ENCODE measurements at regions of chr22 and their contacts with region 1.

Region 1: DNA sequence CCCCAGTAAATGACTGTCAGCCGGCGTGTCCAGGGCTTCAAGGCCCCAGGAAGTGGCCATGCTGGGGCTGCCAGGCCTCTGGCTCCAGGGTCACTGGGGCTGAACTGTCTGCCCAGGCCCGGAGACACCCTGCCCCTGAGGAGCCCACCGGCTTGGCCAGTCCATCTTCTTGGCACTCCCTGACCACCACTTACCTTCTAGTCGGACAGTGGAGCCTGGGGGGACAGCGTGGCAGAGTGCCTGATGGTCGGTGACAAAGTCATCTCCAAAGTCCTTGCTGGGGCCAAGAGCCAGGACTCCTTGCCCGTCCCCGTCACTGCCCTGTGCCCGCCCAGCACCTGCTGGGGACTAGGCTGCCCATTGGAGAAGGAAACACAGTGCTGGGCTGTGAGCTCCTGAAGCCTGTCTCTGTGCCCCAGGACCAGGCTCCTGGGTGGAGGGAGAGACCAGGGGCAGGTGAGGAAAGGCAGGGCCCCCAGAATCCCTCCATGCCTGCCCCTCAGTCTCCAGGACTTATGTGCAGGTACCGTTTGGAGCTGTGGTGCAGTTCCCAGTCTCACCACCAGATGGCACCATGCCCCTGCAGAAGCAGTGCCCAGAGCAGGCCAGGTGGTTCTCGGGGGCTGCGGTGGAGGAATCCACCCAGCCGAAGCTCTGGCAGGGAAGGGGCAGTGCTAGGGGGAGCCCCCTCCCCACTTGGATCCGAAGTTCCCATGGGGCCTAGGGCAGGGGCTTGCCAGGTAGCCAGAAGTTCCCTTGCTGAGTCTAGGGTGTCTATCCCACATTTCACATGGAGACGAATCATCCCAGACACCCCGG is 6.0 kb upstream of the CCDC188 start:
- DNase-seq: peak; percentile 83
- H3K4me3 ChIP-seq: no peak overlapping the region
- H3K27ac ChIP-seq: no peak overlapping the region
- H3K4me1 ChIP-seq: no peaks in the 10 kb centered on the region
- H3K27me3 ChIP-seq: no peaks in the 10 kb centered on the region
- CTCF ChIP-seq: peak; percentile 99 to 100 (median 99)
- POLR2A ChIP-seq: peak; percentile 14

Region 2: DNA sequence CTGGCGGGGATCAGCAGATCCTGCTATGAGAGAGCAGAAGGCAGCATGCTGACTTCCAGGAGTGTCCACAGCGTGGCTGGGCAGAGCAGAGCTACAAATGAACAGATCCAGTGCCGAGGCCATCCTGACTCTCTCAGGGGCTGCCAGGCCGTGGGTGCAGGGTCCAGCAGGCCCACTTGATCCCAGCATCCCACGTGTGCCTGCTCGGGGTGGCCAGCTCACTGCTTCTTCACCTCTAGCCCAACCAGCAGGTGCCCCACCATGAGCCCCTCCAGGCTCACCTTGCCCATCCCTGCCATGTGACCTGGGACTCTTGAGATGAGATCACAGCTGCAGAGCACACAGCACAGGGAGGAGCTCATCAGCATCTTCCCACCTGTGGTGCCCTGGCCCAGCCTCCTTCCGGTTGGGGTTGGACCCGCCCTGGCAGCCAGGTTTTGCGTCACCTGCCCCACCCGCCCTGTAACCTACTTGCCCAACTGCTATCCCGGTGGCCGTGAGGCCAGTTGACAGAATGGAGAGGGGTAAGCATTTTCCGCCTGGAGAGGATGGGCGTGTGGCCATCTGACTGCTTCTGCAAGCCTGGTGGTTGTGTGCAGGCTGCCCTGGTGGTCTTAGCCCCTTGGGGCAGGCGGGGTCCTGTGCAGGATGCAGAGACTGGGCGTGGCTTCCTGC is 125.0 kb before region 1 on chr22:
- intact Hi-C with region 1: no loop called
- DNase-seq: no peak
- H3K4me3 ChIP-seq: no peak overlapping the region
- H3K27ac ChIP-seq: no peak overlapping the region
- H3K4me1 ChIP-seq: no peaks in the 10 kb centered on the region
- H3K27me3 ChIP-seq: no peaks in the 10 kb centered on the region
- CTCF ChIP-seq: no peak
- POLR2A ChIP-seq: no peak

Region 3: DNA sequence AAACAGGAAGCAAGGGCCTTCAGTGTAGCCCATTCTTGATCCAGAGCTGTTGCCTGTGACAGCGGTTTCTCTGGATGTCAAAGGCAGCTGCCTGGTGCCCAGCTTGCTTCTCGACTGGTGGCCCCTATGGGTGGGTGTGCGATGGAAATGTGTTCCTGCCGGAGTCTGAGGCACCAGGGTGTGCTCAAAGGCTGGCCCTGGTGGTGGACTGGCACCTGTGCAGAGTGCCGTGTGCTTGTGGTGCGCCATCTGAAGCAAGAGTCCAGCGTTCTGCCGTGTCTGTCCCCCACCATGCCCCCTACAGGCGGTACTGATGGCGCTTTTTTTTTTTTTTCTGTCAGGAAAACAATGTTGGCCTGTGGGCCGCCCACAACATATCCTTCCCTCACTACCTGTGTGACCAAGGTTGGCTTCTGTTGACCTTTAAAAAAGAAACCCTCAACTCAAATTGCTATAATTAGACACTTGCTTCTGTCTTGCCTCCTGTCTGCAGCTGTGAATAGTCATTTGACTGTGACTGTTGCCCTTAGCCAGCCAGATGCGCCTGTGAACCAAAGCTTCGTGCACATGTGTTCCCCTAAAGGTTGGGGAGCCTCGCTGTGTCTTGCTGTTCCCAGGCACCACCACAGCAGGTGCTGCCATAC is 45.7 kb before region 1 on chr22:
- intact Hi-C with region 1: no loop called
- DNase-seq: no peak
- H3K4me3 ChIP-seq: no peak overlapping the region
- H3K27ac ChIP-seq: no peak overlapping the region
- H3K4me1 ChIP-seq: peaks cover 3% of the 10 kb centered on the region
- H3K27me3 ChIP-seq: no peaks in the 10 kb centered on the region
- CTCF ChIP-seq: peak in 1 of 4 experiments; percentile 16
- POLR2A ChIP-seq: no peak

Region 4: GRCh38 chr22:20268279-20269012 is 111.6 kb after region 1 on chr22 and contains the start of gene RTN4R:
- intact Hi-C with region 1: loop called (anchors 5 kb)
- DNase-seq: peak; percentile 48
- H3K4me3 ChIP-seq: peak within 1 kb of the TSS; percentile 37 to 60
- H3K27ac ChIP-seq: peak within 1 kb of the TSS; percentile 55 to 56
- H3K4me1 ChIP-seq: no peaks in the 10 kb centered on the region
- H3K27me3 ChIP-seq: no peaks in the 10 kb centered on the region
- CTCF ChIP-seq: peak; percentile 26 to 88 (median 59)
- POLR2A ChIP-seq: no peak
- total RNA-seq, gene RTN4R: 4.4 to 6.0 TPM

Region 5: GRCh38 chr22:20284471-20285086 is 127.8 kb after region 1 on chr22:
- intact Hi-C with region 1: loop called (anchors 1 kb)
- DNase-seq: no peak
- H3K4me3 ChIP-seq: no peak overlapping the region
- H3K27ac ChIP-seq: no peak overlapping the region
- H3K4me1 ChIP-seq: no peaks in the 10 kb centered on the region
- H3K27me3 ChIP-seq: no peaks in the 10 kb centered on the region
- CTCF ChIP-seq: no peak
- POLR2A ChIP-seq: no peak